Right ventricle myocardium superior (tissue), 1 donor: ENCODE measurements at regions of chr4 and their contacts with region 1.

Region 1: GRCh38 chr4:1351854-1352633 is 5.0 kb downstream of the UVSSA start:
- DNase-seq: peak; percentile 90
- ATAC-seq: peak; percentile 42

Region 2: DNA sequence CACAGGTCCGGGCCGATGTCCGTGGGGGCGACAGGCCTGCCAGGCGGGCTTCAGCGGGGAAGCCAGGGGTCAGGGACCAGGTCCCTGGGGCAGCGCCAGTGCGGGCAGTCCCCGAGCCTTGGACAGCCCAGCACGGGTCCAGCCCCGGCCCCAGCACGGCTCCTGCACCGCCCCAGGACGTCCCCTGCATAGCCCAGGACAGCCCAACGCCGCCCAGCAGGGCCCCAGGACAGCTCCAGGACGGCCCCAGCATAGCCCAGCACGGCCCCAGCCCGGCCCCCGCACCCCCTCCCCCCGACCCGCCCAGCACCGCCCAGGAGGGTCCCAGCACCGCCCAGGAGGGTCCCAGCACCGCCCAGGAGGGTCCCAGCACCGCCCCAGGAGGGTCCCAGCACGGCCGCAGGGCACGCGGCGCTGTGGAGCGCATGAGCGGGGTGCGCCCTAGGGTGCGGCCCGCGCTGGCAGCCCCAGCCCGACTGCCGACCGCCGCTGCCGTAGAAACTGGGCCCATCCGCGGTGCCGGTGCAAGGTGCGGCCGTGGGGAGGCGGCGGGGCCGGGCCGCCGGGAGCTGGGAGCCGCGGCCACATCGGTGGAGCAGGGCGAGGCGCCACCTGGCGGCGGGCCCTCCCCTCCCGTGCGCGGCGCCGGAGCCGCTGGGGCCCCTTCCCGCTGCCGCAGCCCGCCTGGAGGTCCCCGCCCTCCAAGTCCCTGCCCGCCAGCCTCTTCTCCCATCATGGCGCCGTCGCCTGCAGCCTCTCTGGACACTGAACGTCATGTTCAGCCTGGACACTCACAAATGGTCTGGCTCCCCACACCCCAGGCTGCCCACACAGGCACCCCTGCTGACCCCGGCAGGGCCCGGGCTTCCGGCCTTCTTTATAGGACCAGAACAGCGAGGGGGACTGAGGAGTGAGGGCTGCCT is 161.0 kb after region 1 on chr4:
- intact Hi-C with region 1: loop called (anchors 10 kb)
- DNase-seq: peak; percentile 57
- ATAC-seq: peak; percentile 85

Region 3: GRCh38 chr4:1628892-1629698 is 277.1 kb after region 1 on chr4:
- intact Hi-C with region 1: loop called (anchors 2 kb)
- DNase-seq: peak; percentile 79
- ATAC-seq: peak; percentile 86